Right ventricle myocardium inferior (tissue), 1 donor: ENCODE measurements at regions of chr1 and their contacts with region 1.

Region 1: GRCh38 chr1:19704247-19705113 is 39.8 kb downstream of the HTR6 start:
- DNase-seq: peak; percentile 73
- ATAC-seq: peak; percentile 86

Region 2: GRCh38 chr1:19661721-19662228 is 42.7 kb before region 1 on chr1:
- intact Hi-C with region 1: loop called (anchors 1 kb)
- DNase-seq: no peak
- ATAC-seq: no peak

Region 3: DNA sequence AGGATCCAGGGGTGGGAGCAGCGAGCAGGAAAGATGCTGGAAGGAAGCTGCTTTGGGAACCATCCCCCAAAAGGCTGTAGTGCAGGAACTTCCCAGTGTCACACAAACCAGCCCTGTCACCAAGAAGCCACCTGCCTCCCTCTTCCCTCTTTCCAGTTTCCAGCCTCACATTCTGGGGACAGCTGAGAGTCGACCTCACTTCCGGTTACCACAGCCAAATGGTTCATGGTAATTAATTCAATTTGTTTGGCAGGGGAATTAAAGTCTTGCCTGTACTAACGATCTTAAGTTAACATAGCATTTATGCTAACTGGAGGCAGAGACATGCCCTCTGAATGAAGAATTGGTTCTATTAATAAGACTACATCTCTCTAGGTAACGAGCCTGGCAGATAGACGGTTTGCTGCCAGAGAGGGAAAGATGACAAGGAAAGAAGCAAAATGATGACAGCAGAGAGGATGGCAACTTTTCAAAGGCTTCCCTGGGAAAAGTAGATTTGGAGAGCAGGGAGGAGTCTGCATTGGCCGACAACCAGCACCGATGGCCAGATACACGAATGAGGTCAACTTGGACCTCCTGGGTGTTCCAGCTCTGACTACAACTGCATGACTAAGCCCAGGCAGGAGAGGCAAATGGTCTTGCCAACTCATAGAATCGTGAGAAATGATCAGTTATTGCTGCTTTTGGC is 31.1 kb after region 1 on chr1:
- intact Hi-C with region 1: no loop called
- DNase-seq: peak; percentile 83
- ATAC-seq: peak; percentile 88